B cell (primary cell): ENCODE measurements at regions of chr2 and their contacts with region 1.

Region 1: GRCh38 chr2:11753886-11754699 is 7.7 kb downstream of the LPIN1 start:
- DNase-seq: no peak
- ATAC-seq: peak; percentile 40
- H3K4me3 ChIP-seq: peak overlapping the region; percentile 6 to 58 (median 46)
- H3K4me3 Mint-ChIP-seq: peak overlapping the region; percentile 94
- H3K27ac ChIP-seq: peak overlapping the region; percentile 71 to 89
- H3K27ac Mint-ChIP-seq: peak overlapping the region; percentile 98
- H3K4me1 ChIP-seq: peaks cover 70 to 94% of the 10 kb centered on the region in 2 donors
- H3K4me1 Mint-ChIP-seq: peaks cover 88% of the 10 kb centered on the region
- H3K27me3 ChIP-seq: no peaks in the 10 kb centered on the region
- H3K27me3 Mint-ChIP-seq: no peaks in the 10 kb centered on the region
- CTCF ChIP-seq: no peak

Region 2: DNA sequence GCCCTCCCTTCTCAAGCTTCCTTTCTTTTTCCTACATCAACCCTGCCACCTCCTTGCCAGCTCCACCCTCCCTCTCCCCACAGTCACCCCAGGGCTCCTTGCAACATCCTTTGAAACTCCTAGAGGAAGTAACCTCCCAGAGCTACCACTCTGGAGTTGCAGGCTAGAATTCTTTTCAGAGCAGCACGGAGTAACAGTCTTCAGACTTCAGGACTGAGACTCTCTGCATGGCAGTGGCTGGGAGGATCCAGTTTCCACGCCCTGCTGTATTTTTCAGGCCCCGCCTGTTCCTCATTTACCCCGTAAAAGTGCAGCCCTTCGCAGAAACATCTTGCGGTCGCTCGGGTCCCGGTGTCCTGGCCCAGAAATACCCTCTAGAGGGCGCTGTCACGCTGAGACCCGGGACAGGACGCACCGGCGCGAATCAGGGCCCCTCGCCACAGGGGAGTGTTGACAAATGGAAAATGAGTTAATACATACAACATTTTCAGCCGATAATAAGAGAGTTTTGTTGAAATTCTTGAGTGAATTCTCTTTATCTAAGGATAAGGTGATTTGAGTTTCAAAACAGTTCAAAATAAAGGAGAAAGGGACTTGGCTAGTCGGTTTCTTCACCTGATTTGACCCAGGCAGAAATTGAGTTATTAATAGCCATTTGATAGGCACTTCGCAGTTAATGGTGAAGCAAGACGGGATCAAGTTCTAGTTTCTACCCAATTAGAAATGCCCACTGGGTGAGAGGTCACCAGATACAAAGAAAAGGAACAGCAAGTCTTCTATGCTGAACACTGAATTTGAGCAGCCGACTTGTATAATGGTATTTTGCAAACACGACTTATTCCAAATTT is 65.6 kb before region 1 on chr2:
- CTCF ChIA-PET with region 1: interaction called, 12 read pairs
- POLR2A ChIA-PET with region 1: interaction called, 3 read pairs
- intact Hi-C with region 1: no loop called
- DNase-seq: peak; percentile 89
- ATAC-seq: peak; percentile 83
- H3K4me3 ChIP-seq: peak overlapping the region in 1 of 5 experiments; percentile 17
- H3K4me3 Mint-ChIP-seq: peak overlapping the region; percentile 67
- H3K27ac ChIP-seq: no peak overlapping the region
- H3K27ac Mint-ChIP-seq: no peak overlapping the region
- H3K4me1 ChIP-seq: peaks cover 11 to 16% of the 10 kb centered on the region in 2 donors
- H3K4me1 Mint-ChIP-seq: peaks cover 8% of the 10 kb centered on the region
- H3K27me3 ChIP-seq: peaks cover 0 to 4% (median 0%) of the 10 kb centered on the region in 4 experiments
- H3K27me3 Mint-ChIP-seq: peaks cover 25% of the 10 kb centered on the region
- CTCF ChIP-seq: peak; percentile 85

Region 3: DNA sequence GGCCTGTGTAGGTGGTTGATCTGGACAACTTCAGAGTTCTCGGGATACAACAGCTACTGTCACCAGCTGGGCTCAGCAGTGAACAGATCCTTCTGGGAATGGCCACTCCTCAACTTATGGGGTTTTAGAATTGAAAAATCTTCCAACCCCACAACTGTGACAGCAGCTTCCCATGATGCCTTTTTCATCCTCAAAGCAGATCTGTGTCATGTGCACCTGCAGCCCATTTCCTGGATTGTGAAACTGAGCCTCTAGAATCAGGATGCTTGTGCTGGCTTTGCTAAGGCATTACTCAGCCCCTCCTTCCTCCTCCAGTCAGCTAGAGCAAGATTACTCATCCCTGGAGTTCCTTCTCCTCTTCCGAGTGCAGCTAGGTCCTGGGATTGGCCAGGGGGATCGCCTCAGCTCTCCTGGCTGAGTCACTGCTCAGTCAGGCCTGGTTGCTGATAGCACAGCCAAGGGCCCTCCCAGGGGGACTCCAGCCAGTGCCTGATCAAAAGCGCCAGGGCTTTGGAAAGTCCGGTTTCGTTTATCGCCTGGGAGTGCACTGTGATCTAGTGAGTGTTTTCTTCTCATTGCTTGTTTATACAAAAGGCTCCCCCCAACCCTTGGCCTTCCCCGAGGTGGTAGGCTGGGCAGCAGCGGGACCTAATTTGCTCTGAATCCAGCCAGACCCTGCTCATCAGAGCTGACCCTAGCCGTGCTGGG is 10.1 kb before region 1 on chr2:
- CTCF ChIA-PET with region 1: interaction called, 45 read pairs
- POLR2A ChIA-PET with region 1: interaction called, 7 read pairs
- intact Hi-C with region 1: loop called (anchors 1 kb)
- DNase-seq: peak; percentile 72
- ATAC-seq: peak; percentile 43
- H3K4me3 ChIP-seq: peak overlapping the region in 2 of 5 experiments; percentile 3 to 17
- H3K4me3 Mint-ChIP-seq: peak overlapping the region; percentile 63
- H3K27ac ChIP-seq: no peak overlapping the region
- H3K27ac Mint-ChIP-seq: peak overlapping the region; percentile 85
- H3K4me1 ChIP-seq: peaks cover 37 to 52% of the 10 kb centered on the region in 2 donors
- H3K4me1 Mint-ChIP-seq: peaks cover 49% of the 10 kb centered on the region
- H3K27me3 ChIP-seq: no peaks in the 10 kb centered on the region
- H3K27me3 Mint-ChIP-seq: no peaks in the 10 kb centered on the region
- CTCF ChIP-seq: no peak

Region 4: DNA sequence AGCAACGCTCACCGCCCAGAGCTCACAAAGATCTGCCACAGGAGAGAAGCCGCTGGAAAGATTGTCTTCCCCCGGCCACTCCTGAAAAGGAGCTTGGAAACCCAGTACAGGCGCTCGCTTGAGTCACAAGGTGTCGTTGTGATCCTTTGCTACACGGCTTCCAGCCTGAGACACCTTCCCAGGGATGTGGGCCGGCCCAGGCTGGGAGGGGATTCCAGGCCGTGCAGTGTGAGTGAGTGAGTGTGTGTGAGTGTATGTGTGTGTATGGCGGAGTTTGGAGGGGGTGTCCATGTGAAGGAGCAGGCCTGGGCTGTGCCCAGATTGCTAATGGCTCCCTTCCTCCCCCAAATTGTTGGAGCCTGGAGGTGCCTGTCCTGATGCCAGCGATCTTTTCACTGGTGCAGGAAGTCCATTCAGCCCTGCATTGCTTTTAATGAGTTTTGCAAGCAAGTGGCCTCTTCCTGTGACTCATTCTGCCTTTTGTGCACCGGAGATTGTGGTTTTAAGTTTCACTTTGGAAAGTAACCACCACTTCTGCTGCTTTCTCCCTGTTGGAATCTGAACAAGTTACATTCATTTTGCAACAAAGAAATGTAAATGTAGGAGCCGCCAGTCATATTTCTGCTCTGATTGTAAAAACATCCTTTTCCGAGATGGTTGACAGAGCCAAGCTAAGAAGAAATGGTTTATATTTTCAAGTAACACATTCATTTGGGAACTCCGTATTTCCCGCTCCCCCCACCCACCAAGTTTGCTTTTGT is 76.0 kb after region 1 on chr2:
- CTCF ChIA-PET with region 1: no interaction called
- POLR2A ChIA-PET with region 1: no interaction called
- intact Hi-C with region 1: no loop called
- DNase-seq: peak; percentile 58
- ATAC-seq: peak; percentile 59
- H3K4me3 ChIP-seq: peak overlapping the region in 4 of 5 experiments; percentile 3 to 34 (median 20)
- H3K4me3 Mint-ChIP-seq: peak overlapping the region; percentile 83
- H3K27ac ChIP-seq: peak overlapping the region; percentile 40 to 64
- H3K27ac Mint-ChIP-seq: peak overlapping the region; percentile 78
- H3K4me1 ChIP-seq: peaks cover 42 to 63% of the 10 kb centered on the region in 2 donors
- H3K4me1 Mint-ChIP-seq: peaks cover 61% of the 10 kb centered on the region
- H3K27me3 ChIP-seq: no peaks in the 10 kb centered on the region
- H3K27me3 Mint-ChIP-seq: no peaks in the 10 kb centered on the region
- CTCF ChIP-seq: no peak

Region 5: GRCh38 chr2:12076810-12077209 is 322.7 kb after region 1 on chr2:
- CTCF ChIA-PET with region 1: no interaction called
- POLR2A ChIA-PET with region 1: no interaction called
- intact Hi-C with region 1: loop called (anchors 10 kb)
- DNase-seq: no peak
- ATAC-seq: no peak
- H3K4me3 ChIP-seq: no peak overlapping the region
- H3K4me3 Mint-ChIP-seq: no peak overlapping the region
- H3K27ac ChIP-seq: no peak overlapping the region
- H3K27ac Mint-ChIP-seq: no peak overlapping the region
- H3K4me1 ChIP-seq: peaks cover 25 to 29% of the 10 kb centered on the region in 2 donors
- H3K4me1 Mint-ChIP-seq: peaks cover 30% of the 10 kb centered on the region
- H3K27me3 ChIP-seq: no peaks in the 10 kb centered on the region
- H3K27me3 Mint-ChIP-seq: no peaks in the 10 kb centered on the region
- CTCF ChIP-seq: no peak